OCI-LY7 (cell line): ENCODE measurements at regions of chrX and their contacts with region 1.

Region 1: GRCh38 chrX:54529552-54530357 is at the start of gene GNL3L:
- DNase-seq: peak; percentile 88
- H3K4me3 ChIP-seq: peak within 1 kb of the TSS; percentile 99
- H3K27ac ChIP-seq: peak within 1 kb of the TSS; percentile 76
- H3K4me1 ChIP-seq: peaks cover 31% of the 10 kb centered on the region
- CTCF ChIP-seq: no peak
- total RNA-seq, gene GNL3L: 45.1 and 45.7 TPM in 2 replicates

Region 2: DNA sequence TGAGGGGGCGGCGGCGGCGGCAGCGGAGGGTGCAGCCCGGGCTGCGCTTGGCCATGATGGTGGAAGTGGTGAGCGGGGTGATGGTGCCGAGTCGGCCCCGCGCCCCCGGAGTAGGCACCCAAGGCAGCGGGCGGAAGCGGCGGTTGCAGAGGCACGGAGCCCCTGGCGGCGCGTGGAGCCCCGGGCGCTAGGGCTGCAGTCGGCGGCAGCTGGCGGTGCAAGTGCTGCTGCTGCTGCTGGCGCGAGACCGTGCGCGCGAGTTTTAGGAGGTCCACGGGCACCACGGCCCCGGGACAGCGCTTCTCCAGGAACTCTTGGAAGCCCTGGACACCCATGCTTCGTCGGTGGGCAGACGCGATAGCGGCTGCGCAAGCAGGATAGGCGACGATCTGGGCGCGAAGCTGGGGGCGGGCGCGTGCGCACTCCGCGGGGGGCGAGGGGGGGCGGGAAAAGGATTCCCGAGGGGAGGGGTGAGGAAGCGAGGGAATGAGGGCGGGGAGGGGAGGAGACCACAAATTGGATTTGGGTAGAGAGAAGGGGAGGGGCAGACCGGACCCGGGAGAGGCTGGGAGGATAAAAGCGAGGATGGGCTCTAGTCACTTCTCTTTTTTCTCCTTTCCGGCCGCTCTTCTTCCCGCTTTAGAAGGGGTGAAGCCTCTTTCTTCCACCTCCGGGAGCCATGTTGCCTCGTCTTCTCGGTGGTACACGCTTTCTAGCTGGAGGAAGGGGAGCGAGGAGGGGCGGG is 346.7 kb before region 1 on chrX and contains the start of gene FAM120C:
- CTCF ChIA-PET with region 1: no interaction called
- POLR2A ChIA-PET with region 1: no interaction called
- intact Hi-C with region 1: loop called (anchors 5 kb)
- DNase-seq: peak; percentile 73
- H3K4me3 ChIP-seq: peak within 1 kb of the TSS; percentile 96
- H3K27ac ChIP-seq: peak within 1 kb of the TSS; percentile 76
- H3K4me1 ChIP-seq: peaks cover 28% of the 10 kb centered on the region
- CTCF ChIP-seq: no peak
- total RNA-seq, gene FAM120C: 16.0 and 21.4 TPM in 2 replicates

Region 3: DNA sequence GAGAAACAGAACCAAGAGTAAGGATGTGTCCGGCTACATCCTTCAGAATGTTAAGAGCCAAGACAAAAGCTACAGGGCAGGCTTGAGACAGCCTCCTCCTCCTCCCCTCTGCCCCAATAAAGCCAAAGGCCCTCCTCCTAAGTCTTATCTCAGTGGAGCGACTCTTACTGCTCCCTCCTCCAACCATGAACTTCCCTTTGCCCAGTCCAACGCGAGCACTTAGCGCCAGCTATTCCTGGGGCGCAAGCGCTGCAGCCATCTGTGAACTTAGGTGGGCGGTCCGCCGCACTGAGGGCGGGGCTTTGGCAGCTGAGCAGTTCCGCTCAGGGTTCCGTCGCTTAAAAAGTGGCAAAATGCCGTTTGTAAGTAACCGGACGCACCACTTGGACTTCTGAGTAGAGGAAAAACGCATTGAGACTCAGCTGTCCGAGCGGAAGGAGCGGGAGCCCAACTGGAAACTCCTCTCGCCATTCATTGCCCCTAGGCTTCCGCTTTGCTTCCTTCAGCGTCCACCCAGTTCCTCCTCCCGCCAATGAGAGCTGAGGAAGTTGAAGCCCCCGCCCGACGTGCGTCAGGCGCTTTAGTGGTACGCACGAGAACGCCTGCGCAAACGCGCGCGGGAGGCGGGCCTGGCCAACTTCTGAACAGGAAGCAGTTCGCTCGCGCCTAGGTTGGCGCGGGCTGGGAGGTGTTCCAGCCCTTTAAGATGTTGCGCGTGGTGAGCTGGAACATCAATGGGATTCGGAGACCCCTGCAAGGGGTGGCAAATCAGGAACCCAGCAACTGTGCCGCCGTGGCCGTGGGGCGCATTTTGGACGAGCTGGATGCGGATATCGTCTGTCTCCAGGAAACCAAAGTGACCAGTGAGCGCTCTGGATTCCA is 470.2 kb after region 1 on chrX and contains the start of gene APEX2:
- CTCF ChIA-PET with region 1: no interaction called
- POLR2A ChIA-PET with region 1: no interaction called
- intact Hi-C with region 1: loop called (anchors 5 kb)
- DNase-seq: peak; percentile 91
- H3K4me3 ChIP-seq: peak within 1 kb of the TSS; percentile 83
- H3K27ac ChIP-seq: peak within 1 kb of the TSS; percentile 90
- H3K4me1 ChIP-seq: peaks cover 13% of the 10 kb centered on the region
- CTCF ChIP-seq: no peak
- total RNA-seq, gene APEX2: 11.4 and 14.2 TPM in 2 replicates

Region 4: GRCh38 chrX:55801805-55802204 is 1272.0 kb after region 1 on chrX:
- CTCF ChIA-PET with region 1: no interaction called
- POLR2A ChIA-PET with region 1: no interaction called
- intact Hi-C with region 1: no loop called
- DNase-seq: no peak
- H3K4me3 ChIP-seq: no peak overlapping the region
- H3K27ac ChIP-seq: no peak overlapping the region
- H3K4me1 ChIP-seq: no peaks in the 10 kb centered on the region
- CTCF ChIP-seq: no peak